ENCODE measurements at regions of chr15 and their contacts with region 1.

Region 1: DNA sequence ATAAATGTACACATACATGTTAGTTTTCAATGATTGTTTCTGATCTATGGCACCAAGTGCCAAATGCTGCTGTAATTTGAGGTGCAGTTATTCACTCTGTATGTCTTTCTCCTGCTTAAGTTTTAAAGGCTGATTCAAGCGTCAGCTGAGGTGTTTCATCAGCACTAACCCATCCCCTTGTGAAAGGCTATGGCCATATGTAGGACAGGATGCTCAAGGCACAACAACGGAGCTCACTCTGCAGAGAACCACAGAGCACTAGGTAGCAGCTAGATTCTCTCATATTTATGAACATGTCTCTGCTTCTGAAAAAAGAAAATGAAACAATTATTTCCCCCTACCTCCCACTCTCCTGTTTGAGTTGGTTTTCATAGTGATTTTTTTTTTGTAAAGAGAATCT is 340.0 kb upstream of the TMCO5A start:
- DNase-seq: no peak
- H3K4me3 ChIP-seq: no peak overlapping the region
- H3K27ac ChIP-seq: no peak overlapping the region
- H3K4me1 ChIP-seq: no peaks in the 10 kb centered on the region
- H3K27me3 ChIP-seq: no peaks in the 10 kb centered on the region
- CTCF ChIP-seq: no peak
- POLR2A ChIP-seq: no peak

Region 2: DNA sequence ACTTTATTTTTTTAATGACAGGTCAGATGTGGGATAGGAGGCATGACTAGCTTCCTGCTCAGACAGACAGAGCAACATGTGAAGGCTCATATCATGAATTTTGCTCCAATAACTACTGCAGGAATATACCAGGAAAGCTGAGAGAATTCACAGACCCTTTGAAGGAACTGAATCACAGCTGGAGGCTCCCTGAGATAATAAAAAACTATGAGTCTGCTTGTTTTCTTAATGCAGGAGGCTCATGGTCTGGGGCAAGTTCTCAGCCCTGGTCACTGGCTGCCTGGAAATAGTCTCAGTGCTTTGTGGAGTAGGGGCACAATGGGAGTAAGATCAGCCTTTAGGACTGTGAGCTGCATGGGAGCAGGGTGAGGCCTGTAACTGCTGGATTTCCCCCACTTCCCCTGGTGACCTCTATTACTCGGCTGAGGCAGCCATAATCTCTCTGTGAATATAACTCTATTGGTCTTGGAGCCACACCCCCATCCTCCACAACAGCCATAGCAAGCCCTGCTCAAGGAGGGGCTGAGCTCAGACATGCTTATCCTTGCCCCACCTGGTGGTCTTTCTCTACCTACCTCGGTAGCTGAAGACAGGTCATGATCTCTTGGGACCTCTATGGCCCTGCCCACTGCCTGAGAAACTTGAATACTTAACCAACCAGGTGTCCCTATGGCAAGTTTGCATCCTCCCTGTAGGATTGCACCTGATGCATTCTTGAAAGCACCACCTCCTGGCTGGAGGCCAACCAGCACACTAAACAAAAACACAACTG is 58.4 kb after region 1 on chr15:
- intact Hi-C with region 1: loop called (anchors 10 kb)
- DNase-seq: no peak
- H3K4me3 ChIP-seq: no peak overlapping the region
- H3K27ac ChIP-seq: no peak overlapping the region
- H3K4me1 ChIP-seq: no peaks in the 10 kb centered on the region
- H3K27me3 ChIP-seq: no peaks in the 10 kb centered on the region
- CTCF ChIP-seq: no peak
- POLR2A ChIP-seq: no peak